Caki2 (cell line): ENCODE measurements at regions of chr10 and their contacts with region 1.

Region 1: GRCh38 chr10:117757086-117757720 is 214.7 kb downstream of the EMX2 start:
- DNase-seq: no peak

Region 2: GRCh38 chr10:117442944-117443685 is 314.1 kb before region 1 on chr10:
- in situ Hi-C with region 1: no loop called
- DNase-seq: peak; percentile 26

Region 3: GRCh38 chr10:117694190-117694589 is 63.0 kb before region 1 on chr10:
- in situ Hi-C with region 1: no loop called
- DNase-seq: no peak

Region 4: GRCh38 chr10:118290471-118290995 is 533.3 kb after region 1 on chr10:
- in situ Hi-C with region 1: loop called (anchors 10 kb)
- DNase-seq: no peak